ENCODE measurements at regions of chr14 and their contacts with region 1.

Region 1: GRCh38 chr14:69090187-69090789 is 62.6 kb downstream of the DCAF5 start:
- DNase-seq: peak; percentile 35 to 64
- ATAC-seq: peak; percentile 86 to 93; a peak in 5 of 6 replicates
- H3K4me3 ChIP-seq: no peak overlapping the region
- H3K27ac ChIP-seq: no peak overlapping the region
- H3K4me1 ChIP-seq: peaks cover 24% of the 10 kb centered on the region
- CTCF ChIP-seq: peak; percentile 84
- EP300 ChIP-seq: no peak
- POLR2A ChIP-seq: no peak
- RAD21 ChIP-seq: peak; percentile 84 to 88

Region 2: GRCh38 chr14:68862954-68863594 is 227.2 kb before region 1 on chr14:
- CTCF ChIA-PET with region 1: interaction called, 45 read pairs
- POLR2A ChIA-PET with region 1: no interaction called
- DNase-seq: peak; percentile 79 to 85
- ATAC-seq: peak; percentile 79 to 85
- H3K4me3 ChIP-seq: no peak overlapping the region
- H3K27ac ChIP-seq: peak overlapping the region; percentile 41 to 62; a peak in 3 of 6 replicates
- H3K4me1 ChIP-seq: no peaks in the 10 kb centered on the region
- CTCF ChIP-seq: peak; percentile 90
- EP300 ChIP-seq: no peak
- POLR2A ChIP-seq: no peak
- RAD21 ChIP-seq: peak; percentile 94 to 95

Region 3: GRCh38 chr14:68911594-68912227 is 178.6 kb before region 1 on chr14:
- CTCF ChIA-PET with region 1: interaction called, 48 read pairs
- POLR2A ChIA-PET with region 1: no interaction called
- DNase-seq: peak; percentile 78 to 92
- ATAC-seq: peak; percentile 89 to 95
- H3K4me3 ChIP-seq: no peak overlapping the region
- H3K27ac ChIP-seq: peak overlapping the region; percentile 42 to 55; a peak in 4 of 6 replicates
- H3K4me1 ChIP-seq: peaks cover 31% of the 10 kb centered on the region
- CTCF ChIP-seq: peak; percentile 99
- EP300 ChIP-seq: no peak
- POLR2A ChIP-seq: no peak
- RAD21 ChIP-seq: peak; percentile 97 to 98

Region 4: DNA sequence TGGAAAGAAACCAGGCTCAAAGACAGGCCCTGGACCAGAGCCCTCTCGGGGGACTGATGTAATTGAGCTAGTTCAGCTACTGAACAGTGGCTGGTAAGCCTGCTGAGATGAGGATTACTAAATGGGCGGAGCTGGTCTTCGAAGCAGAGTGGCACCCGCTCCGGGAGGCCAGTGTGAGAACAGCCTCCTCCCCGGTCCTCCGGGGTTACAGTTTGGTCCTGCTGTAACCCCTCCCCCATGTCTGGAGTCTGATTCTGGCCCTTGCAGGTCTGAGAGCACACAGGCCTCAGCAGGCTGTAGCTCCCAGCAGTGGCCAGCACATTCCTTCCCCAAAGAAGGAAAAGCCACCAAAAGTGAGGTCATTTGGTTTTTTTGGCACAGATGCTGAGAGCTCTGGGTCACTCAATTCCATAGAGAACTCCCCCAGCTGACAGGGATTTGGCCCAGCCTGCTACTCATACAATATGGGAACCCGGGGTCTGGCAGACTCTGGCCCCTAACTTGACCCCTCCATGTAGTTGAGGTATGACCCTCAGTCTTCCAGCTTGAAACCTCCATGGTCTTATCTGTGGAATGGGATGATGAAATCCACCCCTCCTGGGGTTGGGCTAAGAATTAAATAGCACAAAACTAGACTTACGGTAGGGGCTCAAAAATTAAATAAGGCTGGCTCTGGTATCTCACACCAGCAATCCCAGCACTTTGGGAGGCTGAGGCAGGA is 150.2 kb before region 1 on chr14:
- CTCF ChIA-PET with region 1: interaction called, 19 read pairs
- POLR2A ChIA-PET with region 1: no interaction called
- DNase-seq: peak; percentile 82 to 98
- ATAC-seq: peak; percentile 69 to 78
- H3K4me3 ChIP-seq: no peak overlapping the region
- H3K27ac ChIP-seq: peak overlapping the region; percentile 98 to 99
- H3K4me1 ChIP-seq: peaks cover 95% of the 10 kb centered on the region
- CTCF ChIP-seq: no peak
- EP300 ChIP-seq: peak; percentile 61 to 84; a peak in 3 of 5 replicates
- POLR2A ChIP-seq: no peak
- RAD21 ChIP-seq: peak; percentile 19 to 48; a peak in 4 of 5 replicates

Region 5: DNA sequence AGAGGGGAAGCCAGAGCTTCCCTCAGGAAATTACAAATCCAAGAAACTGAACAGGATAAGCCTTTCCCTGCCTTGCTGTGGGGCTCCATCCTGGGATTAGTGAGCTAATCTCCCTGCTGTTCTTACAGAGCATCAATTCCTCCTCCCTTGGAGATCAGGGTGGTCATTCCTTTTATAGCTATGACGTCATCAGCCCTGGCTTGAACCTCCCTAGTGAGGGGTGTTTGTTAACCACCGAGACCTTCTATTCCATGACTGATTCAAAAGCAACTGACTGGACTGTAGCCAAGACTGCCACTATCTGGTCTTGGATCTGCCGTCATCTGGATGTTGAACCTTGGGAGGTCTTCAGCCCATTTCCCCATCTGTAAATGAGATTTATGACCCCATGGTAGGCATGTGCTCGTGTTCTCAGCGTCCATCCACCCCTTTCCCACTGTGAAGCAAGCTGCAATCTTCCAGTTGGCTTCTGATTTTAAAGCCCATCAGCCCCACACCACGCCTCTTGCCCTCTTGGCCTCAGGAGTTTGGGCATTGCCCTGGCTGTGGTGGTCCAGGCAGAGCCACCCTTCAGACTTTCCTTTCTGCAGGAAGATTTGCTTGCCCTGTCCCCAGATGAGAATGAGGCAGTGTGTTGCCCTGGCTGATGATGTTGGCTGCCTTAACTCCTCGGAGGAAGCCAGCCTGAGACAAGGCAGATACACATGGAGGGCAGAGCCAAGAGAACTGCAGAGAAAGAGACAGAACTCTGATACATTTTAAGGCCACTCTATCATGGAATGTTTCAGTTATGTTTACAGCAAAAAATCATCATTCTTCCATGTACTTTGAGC is 51.6 kb before region 1 on chr14:
- CTCF ChIA-PET with region 1: interaction called, 17 read pairs
- POLR2A ChIA-PET with region 1: no interaction called
- DNase-seq: peak; percentile 35 to 77
- ATAC-seq: peak; percentile 59 to 70
- H3K4me3 ChIP-seq: no peak overlapping the region
- H3K27ac ChIP-seq: peak overlapping the region; percentile 67 to 83
- H3K4me1 ChIP-seq: peaks cover 38% of the 10 kb centered on the region
- CTCF ChIP-seq: no peak
- EP300 ChIP-seq: peak; percentile 30 to 44; a peak in 2 of 5 replicates
- POLR2A ChIP-seq: no peak
- RAD21 ChIP-seq: no peak; a peak in 1 of 5 replicates

Region 6: GRCh38 chr14:69055999-69056788 is 34.1 kb before region 1 on chr14:
- CTCF ChIA-PET with region 1: interaction called, 15 read pairs
- POLR2A ChIA-PET with region 1: no interaction called
- DNase-seq: no peak
- ATAC-seq: no peak
- H3K4me3 ChIP-seq: no peak overlapping the region
- H3K27ac ChIP-seq: no peak overlapping the region
- H3K4me1 ChIP-seq: peaks cover 19% of the 10 kb centered on the region
- CTCF ChIP-seq: no peak
- EP300 ChIP-seq: no peak
- POLR2A ChIP-seq: no peak
- RAD21 ChIP-seq: no peak

Region 7: GRCh38 chr14:69101331-69101826 is 11.1 kb after region 1 on chr14:
- CTCF ChIA-PET with region 1: interaction called, 35 read pairs
- POLR2A ChIA-PET with region 1: no interaction called
- DNase-seq: peak; percentile 45 to 76
- ATAC-seq: peak; percentile 97 to 98
- H3K4me3 ChIP-seq: no peak overlapping the region
- H3K27ac ChIP-seq: peak overlapping the region; percentile 65
- H3K4me1 ChIP-seq: peaks cover 18% of the 10 kb centered on the region
- CTCF ChIP-seq: peak; percentile 81
- EP300 ChIP-seq: no peak
- POLR2A ChIP-seq: no peak
- RAD21 ChIP-seq: peak; percentile 65 to 70; a peak in 4 of 5 replicates

Region 8: GRCh38 chr14:69149461-69150244 is 59.4 kb after region 1 on chr14:
- CTCF ChIA-PET with region 1: no interaction called
- POLR2A ChIA-PET with region 1: no interaction called
- DNase-seq: no peak
- ATAC-seq: no peak
- H3K4me3 ChIP-seq: no peak overlapping the region
- H3K27ac ChIP-seq: no peak overlapping the region
- H3K4me1 ChIP-seq: peaks cover 21% of the 10 kb centered on the region
- CTCF ChIP-seq: no peak
- EP300 ChIP-seq: no peak
- POLR2A ChIP-seq: no peak
- RAD21 ChIP-seq: no peak

Measured in A549 (cell line).